ENCODE measurements at regions of chr6 and their contacts with region 1.

Region 1: DNA sequence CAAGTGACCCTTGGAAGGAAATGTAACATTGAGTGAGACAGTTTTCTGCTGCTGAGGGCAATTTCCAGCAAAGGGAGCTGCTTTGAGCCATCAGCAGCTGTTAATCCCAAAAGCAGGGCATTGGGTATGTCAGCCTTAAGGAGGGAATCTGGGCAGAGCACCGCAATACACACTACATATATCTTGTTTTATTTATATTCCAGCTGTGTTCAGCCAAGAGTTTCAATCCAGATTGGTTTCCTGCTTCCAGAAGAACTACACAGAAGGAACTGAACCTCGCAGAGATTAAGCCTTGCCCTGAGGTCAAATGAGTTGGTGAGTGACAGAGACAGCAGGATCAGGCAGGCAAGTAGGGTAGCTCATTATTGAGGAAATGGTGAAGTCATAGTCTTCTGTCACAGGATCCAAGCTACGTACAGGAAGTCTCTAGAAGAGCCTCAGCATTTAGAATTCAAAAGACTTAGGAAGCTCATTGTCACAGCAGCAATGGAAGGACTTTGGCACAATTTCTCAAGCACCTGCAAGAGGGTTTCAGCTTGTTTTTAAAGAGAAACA is 109.9 kb upstream of the HEY2 start:
- DNase-seq: no peak
- H3K4me3 ChIP-seq: no peak overlapping the region
- H3K27ac ChIP-seq: no peak overlapping the region
- H3K4me1 ChIP-seq: no peaks in the 10 kb centered on the region
- H3K27me3 ChIP-seq: no peaks in the 10 kb centered on the region
- CTCF ChIP-seq: no peak

Region 2: DNA sequence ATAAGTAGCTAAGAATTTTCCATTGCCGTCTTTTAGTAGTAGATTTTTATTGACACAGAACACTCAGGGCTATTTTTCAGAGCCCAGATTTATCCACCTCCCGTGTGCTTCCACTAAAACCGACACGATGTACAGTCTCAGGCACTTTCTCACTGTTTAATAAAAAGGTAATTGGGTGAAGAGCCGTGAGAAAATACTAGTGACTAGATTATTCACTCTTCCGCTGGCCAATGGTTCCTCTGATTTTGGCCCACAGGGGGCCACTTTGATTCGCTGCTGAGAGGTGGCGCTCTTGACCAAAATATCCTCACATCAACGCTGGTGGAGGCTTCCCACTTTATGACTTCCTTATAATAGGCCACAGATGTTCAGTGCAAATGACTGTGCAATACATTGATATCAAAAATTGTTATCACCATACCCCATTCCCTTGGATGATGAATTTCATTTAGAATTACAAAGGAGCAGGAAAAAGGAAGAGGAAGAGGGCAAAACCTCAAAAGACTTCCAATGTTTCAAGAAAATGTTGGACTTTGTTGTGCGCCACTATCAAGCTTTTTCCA is 325.4 kb before region 1 on chr6:
- CTCF ChIA-PET with region 1: no interaction called
- dilution Hi-C with region 1: no loop called
- in situ Hi-C with region 1: no loop called
- intact Hi-C with region 1: no loop called
- DNase-seq: peak; percentile 47
- H3K4me3 ChIP-seq: no peak overlapping the region
- H3K27ac ChIP-seq: no peak overlapping the region
- H3K4me1 ChIP-seq: no peaks in the 10 kb centered on the region
- H3K27me3 ChIP-seq: no peaks in the 10 kb centered on the region
- CTCF ChIP-seq: peak; percentile 71 to 88

Region 3: DNA sequence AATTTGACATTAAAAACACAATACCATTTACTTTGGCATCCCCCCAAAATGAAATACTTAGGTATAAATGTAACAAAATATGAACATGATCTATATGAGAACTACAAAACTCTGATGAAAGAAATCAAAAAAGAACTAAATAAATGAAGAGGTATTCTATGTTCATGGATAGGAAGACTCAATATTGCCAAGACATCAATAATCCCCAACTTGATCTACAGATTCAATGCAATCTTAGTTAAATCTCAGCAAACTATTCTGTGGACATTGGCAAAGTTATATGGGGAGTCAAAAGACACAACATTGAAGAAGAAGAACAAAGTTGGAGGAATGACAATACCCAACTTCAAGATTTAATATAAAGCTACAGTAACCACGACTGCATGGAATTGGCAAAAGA is 35.3 kb before region 1 on chr6:
- CTCF ChIA-PET with region 1: no interaction called
- dilution Hi-C with region 1: no loop called
- in situ Hi-C with region 1: no loop called
- intact Hi-C with region 1: loop called (anchors 1 kb)
- DNase-seq: no peak
- H3K4me3 ChIP-seq: no peak overlapping the region
- H3K27ac ChIP-seq: no peak overlapping the region
- H3K4me1 ChIP-seq: no peaks in the 10 kb centered on the region
- H3K27me3 ChIP-seq: no peaks in the 10 kb centered on the region
- CTCF ChIP-seq: no peak

Region 4: DNA sequence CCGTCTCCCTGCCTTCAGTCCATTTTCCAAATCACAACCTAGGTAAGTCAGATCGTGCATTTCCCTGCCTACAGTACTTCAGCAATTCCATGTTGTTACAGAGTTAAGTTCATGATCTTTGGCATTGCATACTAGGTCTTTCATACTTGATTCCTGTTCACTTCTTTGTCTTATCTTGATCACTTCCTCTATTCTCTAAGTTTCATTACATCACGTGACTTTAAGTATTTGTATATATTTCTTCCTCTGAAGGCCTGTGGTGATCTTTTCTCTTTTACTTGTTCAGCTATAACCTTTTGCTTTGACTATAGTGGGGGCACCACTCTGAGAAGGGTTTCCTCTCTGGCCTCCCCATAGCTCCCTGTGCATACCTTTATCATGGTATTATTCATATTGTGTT is 447.0 kb after region 1 on chr6:
- CTCF ChIA-PET with region 1: no interaction called
- dilution Hi-C with region 1: no loop called
- in situ Hi-C with region 1: no loop called
- intact Hi-C with region 1: no loop called
- DNase-seq: no peak
- H3K4me3 ChIP-seq: no peak overlapping the region
- H3K27ac ChIP-seq: no peak overlapping the region
- H3K4me1 ChIP-seq: no peaks in the 10 kb centered on the region
- H3K27me3 ChIP-seq: no peaks in the 10 kb centered on the region
- CTCF ChIP-seq: no peak

Measured in mammary epithelial cell (primary cell).